ENCODE measurements at regions of chr12 and their contacts with region 1.

Region 1: GRCh38 chr12:83005534-83006197 is 319.0 kb downstream of the TMTC2 start:
- DNase-seq: no peak
- H3K4me3 ChIP-seq: no peak overlapping the region
- H3K4me3 Mint-ChIP-seq: no peak overlapping the region
- H3K27ac Mint-ChIP-seq: no peak overlapping the region
- H3K4me1 ChIP-seq: no peaks in the 10 kb centered on the region
- H3K4me1 Mint-ChIP-seq: no peaks in the 10 kb centered on the region
- H3K27me3 ChIP-seq: no peaks in the 10 kb centered on the region
- H3K27me3 Mint-ChIP-seq: no peaks in the 10 kb centered on the region
- CTCF ChIP-seq: no peak

Region 2: DNA sequence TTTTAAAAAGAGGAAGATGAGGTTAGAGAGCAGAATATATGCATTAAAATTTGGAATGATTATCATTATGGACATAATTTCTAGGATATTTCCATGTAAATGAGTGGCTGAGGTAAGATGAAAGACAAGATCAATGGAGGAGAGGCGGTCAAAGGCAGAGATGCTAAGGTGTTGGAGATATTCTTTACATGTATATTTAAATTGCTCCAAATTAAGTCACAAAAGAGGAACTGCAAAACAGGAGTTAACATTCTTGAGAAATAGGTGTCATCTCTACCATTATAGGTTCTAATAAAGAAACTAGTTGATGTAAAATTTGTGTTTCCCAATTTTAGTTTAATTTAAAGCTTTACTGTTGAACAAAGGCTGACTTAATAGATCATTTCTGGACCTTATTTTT is 978.1 kb before region 1 on chr12:
- CTCF ChIA-PET with region 1: no interaction called
- POLR2A ChIA-PET with region 1: no interaction called
- intact Hi-C with region 1: no loop called
- DNase-seq: no peak
- H3K4me3 ChIP-seq: no peak overlapping the region
- H3K4me3 Mint-ChIP-seq: no peak overlapping the region
- H3K27ac Mint-ChIP-seq: no peak overlapping the region
- H3K4me1 ChIP-seq: no peaks in the 10 kb centered on the region
- H3K4me1 Mint-ChIP-seq: no peaks in the 10 kb centered on the region
- H3K27me3 ChIP-seq: no peaks in the 10 kb centered on the region
- H3K27me3 Mint-ChIP-seq: no peaks in the 10 kb centered on the region
- CTCF ChIP-seq: no peak

Region 3: GRCh38 chr12:82880442-82880901 is 125.2 kb before region 1 on chr12:
- CTCF ChIA-PET with region 1: no interaction called
- POLR2A ChIA-PET with region 1: no interaction called
- intact Hi-C with region 1: no loop called
- DNase-seq: no peak
- H3K4me3 ChIP-seq: no peak overlapping the region
- H3K4me3 Mint-ChIP-seq: no peak overlapping the region
- H3K27ac Mint-ChIP-seq: no peak overlapping the region
- H3K4me1 ChIP-seq: no peaks in the 10 kb centered on the region
- H3K4me1 Mint-ChIP-seq: no peaks in the 10 kb centered on the region
- H3K27me3 ChIP-seq: no peaks in the 10 kb centered on the region
- H3K27me3 Mint-ChIP-seq: no peaks in the 10 kb centered on the region
- CTCF ChIP-seq: no peak

Region 4: GRCh38 chr12:83378186-83378727 is 372.6 kb after region 1 on chr12:
- CTCF ChIA-PET with region 1: no interaction called
- POLR2A ChIA-PET with region 1: no interaction called
- intact Hi-C with region 1: no loop called
- DNase-seq: no peak
- H3K4me3 ChIP-seq: no peak overlapping the region
- H3K4me3 Mint-ChIP-seq: no peak overlapping the region
- H3K27ac Mint-ChIP-seq: no peak overlapping the region
- H3K4me1 ChIP-seq: no peaks in the 10 kb centered on the region
- H3K4me1 Mint-ChIP-seq: no peaks in the 10 kb centered on the region
- H3K27me3 ChIP-seq: no peaks in the 10 kb centered on the region
- H3K27me3 Mint-ChIP-seq: no peaks in the 10 kb centered on the region
- CTCF ChIP-seq: no peak

Region 5: DNA sequence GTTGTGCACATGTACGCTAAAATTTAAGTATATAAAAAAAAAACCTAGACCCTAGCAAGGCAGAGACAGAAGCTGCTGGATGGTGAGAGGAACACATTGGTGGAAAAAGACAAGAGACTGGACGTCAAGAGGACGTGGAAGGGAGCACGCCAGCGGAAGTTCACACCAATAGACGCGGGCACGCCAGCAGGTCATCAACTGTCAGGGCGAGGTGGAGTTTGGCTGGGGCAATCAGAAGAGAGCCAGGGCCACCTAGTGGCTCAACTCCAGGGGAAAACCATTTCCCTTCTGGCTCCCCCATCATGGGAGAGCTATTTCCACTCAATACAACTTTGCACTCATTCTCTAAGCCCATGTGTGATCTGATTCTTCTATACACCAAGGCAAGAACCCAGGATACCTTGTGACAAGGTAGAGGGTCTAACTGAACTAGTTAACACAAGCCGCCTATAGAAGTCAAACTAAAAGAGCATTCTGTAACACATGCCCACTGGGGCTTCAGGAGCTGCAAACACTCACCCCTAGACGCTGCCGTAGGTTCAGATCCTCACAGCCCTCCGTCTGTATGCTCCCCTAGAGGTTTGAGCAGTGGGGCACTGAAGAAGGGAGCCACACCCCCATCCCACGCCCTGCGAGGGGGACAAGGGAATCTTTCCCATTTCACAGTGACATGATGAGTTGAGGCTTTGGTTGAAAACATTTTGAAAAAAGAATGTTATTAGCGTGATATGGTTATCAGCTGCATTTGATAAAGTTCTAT is 383.8 kb after region 1 on chr12:
- CTCF ChIA-PET with region 1: no interaction called
- POLR2A ChIA-PET with region 1: no interaction called
- intact Hi-C with region 1: loop called (anchors 1 kb)
- DNase-seq: peak; percentile 34 to 42
- H3K4me3 ChIP-seq: no peak overlapping the region
- H3K4me3 Mint-ChIP-seq: no peak overlapping the region
- H3K27ac Mint-ChIP-seq: no peak overlapping the region
- H3K4me1 ChIP-seq: no peaks in the 10 kb centered on the region
- H3K4me1 Mint-ChIP-seq: no peaks in the 10 kb centered on the region
- H3K27me3 ChIP-seq: no peaks in the 10 kb centered on the region
- H3K27me3 Mint-ChIP-seq: no peaks in the 10 kb centered on the region
- CTCF ChIP-seq: peak; percentile 42 to 46

Region 6: GRCh38 chr12:83462419-83462818 is 456.8 kb after region 1 on chr12:
- CTCF ChIA-PET with region 1: no interaction called
- POLR2A ChIA-PET with region 1: no interaction called
- intact Hi-C with region 1: no loop called
- DNase-seq: no peak
- H3K4me3 ChIP-seq: no peak overlapping the region
- H3K4me3 Mint-ChIP-seq: no peak overlapping the region
- H3K27ac Mint-ChIP-seq: no peak overlapping the region
- H3K4me1 ChIP-seq: no peaks in the 10 kb centered on the region
- H3K4me1 Mint-ChIP-seq: peaks cover 6% of the 10 kb centered on the region
- H3K27me3 ChIP-seq: no peaks in the 10 kb centered on the region
- H3K27me3 Mint-ChIP-seq: peaks cover 9% of the 10 kb centered on the region
- CTCF ChIP-seq: no peak

Region 7: GRCh38 chr12:84502907-84503787 is 1497.5 kb after region 1 on chr12:
- CTCF ChIA-PET with region 1: no interaction called
- POLR2A ChIA-PET with region 1: no interaction called
- intact Hi-C with region 1: loop called (anchors 2 kb)
- DNase-seq: peak; percentile 42 to 52
- H3K4me3 ChIP-seq: no peak overlapping the region
- H3K4me3 Mint-ChIP-seq: no peak overlapping the region
- H3K27ac Mint-ChIP-seq: no peak overlapping the region
- H3K4me1 ChIP-seq: no peaks in the 10 kb centered on the region
- H3K4me1 Mint-ChIP-seq: no peaks in the 10 kb centered on the region
- H3K27me3 ChIP-seq: no peaks in the 10 kb centered on the region
- H3K27me3 Mint-ChIP-seq: no peaks in the 10 kb centered on the region
- CTCF ChIP-seq: peak; percentile 66 to 67

Measured in Caco-2 (cell line).